Common myeloid progenitor, CD34-positive (primary cell): ENCODE measurements at regions of chr19 and their contacts with region 1.

Region 1: DNA sequence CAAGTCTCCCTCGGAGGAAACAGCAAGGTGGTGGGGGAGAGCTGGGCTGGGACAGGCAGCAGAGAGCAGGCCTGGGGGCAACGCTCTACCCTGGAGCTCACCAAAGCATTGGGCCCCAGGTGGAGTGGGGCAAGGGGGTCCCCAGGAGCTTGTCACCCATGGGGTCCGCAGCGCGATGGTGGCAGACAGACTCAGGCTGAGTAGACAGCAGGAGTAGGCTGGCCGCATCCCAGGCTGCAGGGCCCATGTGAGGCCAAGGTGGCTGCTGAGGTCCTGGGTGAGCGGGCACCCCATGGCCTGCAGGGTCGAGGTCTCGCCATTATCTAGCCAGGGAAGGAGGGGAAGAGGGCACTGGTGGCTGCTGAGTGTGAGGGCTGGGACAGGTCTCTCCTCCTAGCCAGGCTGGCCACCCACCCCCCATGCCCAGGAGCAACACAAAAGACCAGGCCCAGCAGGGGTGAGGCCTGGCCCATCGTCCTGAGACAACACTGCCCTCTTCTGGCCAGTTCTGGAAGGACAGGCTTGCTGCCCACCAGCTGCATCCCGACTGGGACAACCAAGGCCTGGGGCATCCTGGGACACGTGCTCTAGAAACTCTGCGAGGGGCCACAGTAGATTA is 33.1 kb downstream of the CEBPG start:
- DNase-seq: peak; percentile 48 to 69 (median 60)
- H3K4me3 ChIP-seq: no peak overlapping the region
- H3K27ac ChIP-seq: no peak overlapping the region
- H3K4me1 ChIP-seq: peaks cover 0 to 7% (median 3%) of the 10 kb centered on the region in 4 experiments
- H3K27me3 ChIP-seq: no peaks in the 10 kb centered on the region

Region 2: GRCh38 chr19:33235269-33235995 is 171.2 kb before region 1 on chr19:
- CTCF ChIA-PET with region 1: interaction called, 278 read pairs
- POLR2A ChIA-PET with region 1: no interaction called
- DNase-seq: peak; percentile 54 to 69 (median 61)
- H3K4me3 ChIP-seq: no peak overlapping the region
- H3K27ac ChIP-seq: no peak overlapping the region
- H3K4me1 ChIP-seq: no peaks in the 10 kb centered on the region
- H3K27me3 ChIP-seq: peaks cover 0 to 7% (median 0%) of the 10 kb centered on the region in 5 experiments

Region 3: GRCh38 chr19:33394006-33394849 is 12.4 kb before region 1 on chr19:
- CTCF ChIA-PET with region 1: interaction called, 25 read pairs
- POLR2A ChIA-PET with region 1: no interaction called
- DNase-seq: no peak
- H3K4me3 ChIP-seq: no peak overlapping the region
- H3K27ac ChIP-seq: no peak overlapping the region
- H3K4me1 ChIP-seq: peaks cover 0 to 20% (median 3%) of the 10 kb centered on the region in 4 experiments
- H3K27me3 ChIP-seq: no peaks in the 10 kb centered on the region